Common myeloid progenitor, CD34-positive (primary cell): ENCODE measurements at regions of chr7 and their contacts with region 1.

Region 1: GRCh38 chr7:142535123-142535779 is 214.0 kb upstream of the PRSS1 start:
- DNase-seq: peak; percentile 88 to 94 (median 92)
- H3K4me3 ChIP-seq: peak overlapping the region in 3 of 7 experiments; percentile 14 to 41 (median 38)
- H3K27ac ChIP-seq: peak overlapping the region in 1 of 2 experiments; percentile 2
- H3K4me1 ChIP-seq: peaks cover 0 to 12% (median 12%) of the 10 kb centered on the region in 4 experiments
- H3K27me3 ChIP-seq: no peaks in the 10 kb centered on the region

Region 2: GRCh38 chr7:141915565-141915964 is 619.7 kb before region 1 on chr7:
- CTCF ChIA-PET with region 1: no interaction called
- POLR2A ChIA-PET with region 1: no interaction called
- DNase-seq: peak; percentile 38 to 91 (median 87)
- H3K4me3 ChIP-seq: no peak overlapping the region
- H3K27ac ChIP-seq: no peak overlapping the region
- H3K4me1 ChIP-seq: peaks cover 0 to 34% (median 12%) of the 10 kb centered on the region in 4 experiments
- H3K27me3 ChIP-seq: no peaks in the 10 kb centered on the region

Region 3: GRCh38 chr7:142459551-142459963 is 75.7 kb before region 1 on chr7:
- CTCF ChIA-PET with region 1: interaction called, 145 read pairs
- POLR2A ChIA-PET with region 1: no interaction called
- DNase-seq: peak; percentile 83 to 89 (median 83)
- H3K4me3 ChIP-seq: peak overlapping the region in 1 of 7 experiments; percentile 36
- H3K27ac ChIP-seq: peak overlapping the region; percentile 27 to 31
- H3K4me1 ChIP-seq: peaks cover 9 to 80% (median 67%) of the 10 kb centered on the region in 4 experiments
- H3K27me3 ChIP-seq: no peaks in the 10 kb centered on the region

Region 4: DNA sequence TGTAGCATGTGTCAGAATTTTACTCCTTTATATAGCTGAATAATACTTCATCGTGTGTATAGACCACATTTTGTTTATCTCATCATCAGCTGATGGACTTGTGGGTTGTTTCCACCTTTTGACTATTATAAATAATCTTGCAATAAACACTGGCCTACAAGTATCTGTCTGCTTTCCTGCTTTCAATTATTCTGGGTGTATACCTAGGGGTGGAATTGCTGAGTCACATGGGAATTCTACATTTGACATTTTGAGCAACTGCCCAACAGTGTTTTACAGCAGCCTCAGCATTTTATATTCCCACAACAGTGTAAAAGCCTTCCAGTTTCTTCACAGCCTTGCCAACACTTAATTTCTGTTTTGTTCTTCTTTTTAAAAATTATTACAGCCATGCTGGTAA is 13.7 kb after region 1 on chr7:
- CTCF ChIA-PET with region 1: interaction called, 38 read pairs
- POLR2A ChIA-PET with region 1: no interaction called
- DNase-seq: peak in 1 of 3 donors; percentile 34
- H3K4me3 ChIP-seq: no peak overlapping the region
- H3K27ac ChIP-seq: no peak overlapping the region
- H3K4me1 ChIP-seq: peaks cover 0 to 8% (median 3%) of the 10 kb centered on the region in 4 experiments
- H3K27me3 ChIP-seq: no peaks in the 10 kb centered on the region

Region 5: DNA sequence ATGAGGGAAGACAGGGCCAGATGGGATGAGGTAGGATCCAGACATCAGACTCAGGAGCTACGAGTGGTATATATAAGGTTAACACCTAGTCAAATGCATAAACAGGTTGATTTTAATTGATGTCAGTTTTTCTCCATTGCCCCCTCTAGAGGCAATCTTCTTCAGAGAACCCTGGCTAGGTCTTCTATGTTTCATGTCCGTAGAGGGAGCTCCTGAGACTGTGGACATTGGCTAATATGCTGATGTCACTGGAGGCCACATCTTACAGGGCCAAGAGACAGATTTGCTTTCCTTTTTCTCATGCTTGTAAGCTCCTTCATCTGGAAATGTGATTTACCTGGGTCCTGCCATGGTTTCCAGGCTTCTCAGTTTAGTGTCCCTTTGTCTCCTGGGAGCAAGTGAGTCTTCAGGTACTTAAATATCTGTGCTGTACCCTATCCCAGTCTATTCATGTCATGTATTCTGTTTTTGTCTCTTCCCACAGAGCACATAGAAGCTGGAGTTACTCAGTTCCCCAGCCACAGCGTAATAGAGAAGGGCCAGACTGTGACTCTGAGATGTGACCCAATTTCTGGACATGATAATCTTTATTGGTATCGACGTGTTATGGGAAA is 52.4 kb after region 1 on chr7:
- CTCF ChIA-PET with region 1: interaction called, 143 read pairs
- POLR2A ChIA-PET with region 1: no interaction called
- DNase-seq: peak; percentile 87 to 88 (median 88)
- H3K4me3 ChIP-seq: no peak overlapping the region
- H3K27ac ChIP-seq: no peak overlapping the region
- H3K4me1 ChIP-seq: peaks cover 2 to 27% (median 22%) of the 10 kb centered on the region in 4 experiments
- H3K27me3 ChIP-seq: no peaks in the 10 kb centered on the region

Region 6: GRCh38 chr7:142632291-142633134 is 97.3 kb after region 1 on chr7:
- CTCF ChIA-PET with region 1: interaction called, 11 read pairs
- POLR2A ChIA-PET with region 1: no interaction called
- DNase-seq: peak; percentile 81 to 88 (median 87)
- H3K4me3 ChIP-seq: peak overlapping the region in 1 of 7 experiments; percentile 11
- H3K27ac ChIP-seq: no peak overlapping the region
- H3K4me1 ChIP-seq: peaks cover 0 to 25% (median 13%) of the 10 kb centered on the region in 4 experiments
- H3K27me3 ChIP-seq: no peaks in the 10 kb centered on the region

Region 7: DNA sequence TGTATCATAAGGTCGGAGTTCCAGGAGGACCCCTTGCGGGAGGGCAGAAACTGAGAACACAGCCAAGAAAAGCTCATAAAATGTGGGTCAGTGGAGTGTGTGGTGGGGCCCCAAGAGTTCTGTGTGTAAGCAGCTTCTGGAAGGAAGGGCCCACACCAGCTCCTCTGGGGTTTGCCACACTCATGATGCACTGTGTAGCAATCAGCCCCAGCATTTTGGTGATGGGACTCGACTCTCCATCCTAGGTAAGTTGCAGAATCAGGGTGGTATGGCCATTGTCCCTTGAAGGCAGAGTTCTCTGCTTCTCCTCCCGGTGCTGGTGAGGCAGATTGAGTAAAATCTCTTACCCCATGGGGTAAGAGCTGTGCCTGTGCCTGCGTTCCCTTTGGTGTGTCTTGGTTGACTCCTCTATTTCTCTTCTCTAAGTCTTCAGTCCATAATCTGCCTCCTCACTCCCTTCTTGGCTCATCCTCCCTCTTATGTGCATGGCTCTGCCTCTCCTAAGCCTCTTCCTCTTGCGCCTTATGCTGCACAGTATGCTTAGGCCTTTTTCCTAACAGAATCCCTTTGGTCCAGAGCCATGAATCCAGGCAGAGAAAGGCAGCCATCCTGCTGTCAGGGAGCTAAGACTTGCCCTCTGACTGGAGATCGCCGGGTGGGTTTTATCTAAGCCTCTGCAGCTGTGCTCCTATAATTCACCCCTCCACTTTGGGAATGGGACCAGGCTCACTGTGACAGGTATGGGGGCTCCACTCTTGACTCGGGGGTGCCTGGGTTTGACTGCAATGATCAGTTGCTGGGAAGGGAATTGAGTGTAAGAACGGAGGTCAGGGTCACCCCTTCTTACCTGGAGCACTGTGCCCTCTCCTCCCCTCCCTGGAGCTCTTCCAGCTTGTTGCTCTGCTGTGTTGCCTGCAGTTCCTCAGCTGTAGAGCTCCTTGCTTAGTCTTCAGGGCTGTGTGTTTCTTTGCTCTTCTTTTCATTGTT is 253.3 kb after region 1 on chr7:
- CTCF ChIA-PET with region 1: interaction called, 18 read pairs
- POLR2A ChIA-PET with region 1: no interaction called
- DNase-seq: no peak
- H3K4me3 ChIP-seq: no peak overlapping the region
- H3K27ac ChIP-seq: no peak overlapping the region
- H3K4me1 ChIP-seq: peaks cover 2 to 39% (median 32%) of the 10 kb centered on the region in 4 experiments
- H3K27me3 ChIP-seq: no peaks in the 10 kb centered on the region